Adrenal gland (tissue), 19 donors: ENCODE measurements at regions of chr12 and their contacts with region 1.

Region 1: GRCh38 chr12:93591137-93591868 is 18.8 kb downstream of the SOCS2 start:
- DNase-seq: peak; percentile 85 to 95 (median 92)
- H3K4me3 ChIP-seq: peak overlapping the region; percentile 22 to 61 (median 44)
- H3K27ac ChIP-seq: peak overlapping the region; percentile 84 to 94 (median 88)
- H3K4me1 ChIP-seq: peaks cover 9 to 15% of the 10 kb centered on the region in 2 donors
- H3K27me3 ChIP-seq: no peaks in the 10 kb centered on the region
- CTCF ChIP-seq: no peak
- POLR2A ChIP-seq: peak; percentile 87 to 97

Region 2: DNA sequence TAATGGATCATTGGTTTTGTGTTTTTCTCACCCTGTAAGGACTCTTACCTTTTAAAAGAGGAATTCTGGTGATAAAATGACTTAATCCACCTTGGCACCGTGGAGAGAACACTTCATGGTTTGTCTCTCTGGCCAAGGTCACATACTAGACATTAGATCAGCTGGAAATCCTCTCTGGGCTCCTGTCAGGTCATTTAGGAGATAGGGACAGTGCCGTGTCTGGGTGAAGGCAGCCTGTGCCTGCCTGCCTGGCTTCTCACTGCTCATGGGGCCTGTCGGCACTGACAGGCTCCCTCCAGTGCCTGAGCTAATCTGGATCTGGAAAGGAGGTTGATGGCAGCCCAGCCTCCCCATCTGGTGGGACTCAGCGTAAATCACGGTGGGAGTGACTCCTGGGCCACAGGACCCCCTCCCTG is 91.6 kb after region 1 on chr12:
- intact Hi-C with region 1: loop called in 1 of 2 experiments (anchors 5 kb)
- DNase-seq: peak; percentile 53 to 84 (median 72)
- H3K4me3 ChIP-seq: no peak overlapping the region
- H3K27ac ChIP-seq: peak overlapping the region; percentile 19 to 86 (median 71)
- H3K4me1 ChIP-seq: peaks cover 24 to 43% of the 10 kb centered on the region in 2 donors
- H3K27me3 ChIP-seq: no peaks in the 10 kb centered on the region
- CTCF ChIP-seq: no peak
- POLR2A ChIP-seq: peak in 1 of 2 donors; percentile 56

Region 3: GRCh38 chr12:93742110-93742934 is 151.0 kb after region 1 on chr12:
- intact Hi-C with region 1: loop called in 1 of 2 experiments (anchors 5 kb)
- DNase-seq: peak; percentile 75 to 87 (median 80)
- H3K4me3 ChIP-seq: peak overlapping the region in 3 of 4 donors; percentile 46 to 87 (median 54)
- H3K27ac ChIP-seq: peak overlapping the region; percentile 58 to 95 (median 89)
- H3K4me1 ChIP-seq: peaks cover 7 to 36% of the 10 kb centered on the region in 2 donors
- H3K27me3 ChIP-seq: no peaks in the 10 kb centered on the region
- CTCF ChIP-seq: peak in 5 of 6 experiments; percentile 24 to 57 (median 38)
- POLR2A ChIP-seq: peak in 1 of 2 donors; percentile 58